Transverse colon (tissue), 4 donors: ENCODE measurements at regions of chr5 and their contacts with region 1.

Region 1: GRCh38 chr5:82351754-82352145 is 73.6 kb upstream of the RPS23 start:
- DNase-seq: no peak
- H3K4me3 ChIP-seq: no peak overlapping the region
- H3K27ac ChIP-seq: peak overlapping the region in 1 of 4 donors; percentile 10
- H3K4me1 ChIP-seq: no peaks in the 10 kb centered on the region
- H3K27me3 ChIP-seq: no peaks in the 10 kb centered on the region
- CTCF ChIP-seq: peak; percentile 70 to 85 (median 77)
- EP300 ChIP-seq: no peak
- POLR2A ChIP-seq: no peak

Region 2: DNA sequence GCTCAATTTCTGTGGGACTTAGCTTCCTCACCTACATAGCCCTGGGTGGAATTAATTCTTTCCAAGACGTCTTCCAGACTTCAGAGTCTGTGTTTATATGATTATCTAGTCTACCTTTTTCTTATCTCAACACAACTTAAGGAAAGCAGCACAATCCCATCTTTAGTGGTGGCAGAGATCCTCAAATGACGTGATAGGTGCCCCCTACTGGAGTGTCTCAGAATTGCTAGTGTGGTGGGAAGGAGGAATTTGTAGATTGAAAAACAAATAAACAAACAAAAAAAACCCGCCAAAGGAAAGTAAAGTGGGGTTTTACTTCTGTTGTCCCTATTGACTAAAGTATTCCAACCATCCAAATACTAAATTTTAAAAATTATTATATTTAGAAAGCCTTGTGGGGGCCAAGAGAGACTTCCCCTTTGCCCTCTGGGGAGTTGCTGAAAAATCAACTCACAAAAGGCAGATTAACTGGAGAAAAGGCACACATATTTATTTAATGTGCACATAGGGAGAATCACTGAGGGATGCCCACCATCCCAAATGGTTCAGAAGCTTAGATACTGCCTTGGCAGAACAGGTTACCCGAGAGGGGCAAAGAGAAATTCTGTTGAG is 442.2 kb after region 1 on chr5:
- in situ Hi-C with region 1: loop called in 3 of 4 experiments (anchors 10 to 25 kb)
- intact Hi-C with region 1: no loop called
- DNase-seq: peak; percentile 35
- H3K4me3 ChIP-seq: no peak overlapping the region
- H3K27ac ChIP-seq: no peak overlapping the region
- H3K4me1 ChIP-seq: no peaks in the 10 kb centered on the region
- H3K27me3 ChIP-seq: no peaks in the 10 kb centered on the region
- CTCF ChIP-seq: peak; percentile 64 to 80 (median 66)
- EP300 ChIP-seq: no peak
- POLR2A ChIP-seq: no peak